Activated CD4-positive, alpha-beta memory T cell treated with anti-CD3 and anti-CD28 coated beads for 36 hours (primary cell): ENCODE measurements at regions of chr11 and their contacts with region 1.

Region 1: DNA sequence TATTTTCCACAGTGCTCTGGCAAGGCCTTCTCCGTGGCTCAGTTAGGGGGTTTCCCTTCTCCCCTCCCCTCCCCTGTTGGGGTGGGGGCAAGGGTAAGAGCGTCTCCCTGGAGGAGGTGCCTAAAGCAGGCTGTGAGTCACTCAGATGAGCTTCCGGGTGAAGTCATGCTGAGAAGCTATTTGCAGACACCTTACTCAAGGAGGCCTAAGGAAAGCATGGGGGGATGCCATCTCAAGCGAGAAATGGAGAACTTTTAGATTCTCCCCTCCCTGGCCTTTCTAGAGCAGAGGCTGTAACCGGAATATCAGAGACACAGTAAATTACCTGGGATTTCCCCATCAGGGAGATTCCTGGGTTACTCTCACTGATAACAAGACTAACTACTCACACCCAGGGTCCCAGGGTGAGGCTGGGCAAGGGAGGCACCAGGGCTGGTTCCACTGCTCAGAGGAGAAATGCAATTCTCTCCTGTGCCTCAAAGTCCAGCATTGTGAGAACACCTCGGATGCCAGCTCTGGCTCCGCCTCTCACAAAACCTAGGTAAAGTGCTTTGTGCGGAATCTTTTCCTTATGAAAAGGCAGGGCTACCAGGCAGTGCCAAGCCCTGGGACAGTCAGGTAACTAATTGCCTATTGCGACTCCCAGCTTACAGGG is 123.6 kb downstream of the ABTB2 start:
- DNase-seq: peak; percentile 90
- H3K4me3 Mint-ChIP-seq: no peak overlapping the region
- H3K27ac Mint-ChIP-seq: peak overlapping the region; percentile 77
- H3K4me1 Mint-ChIP-seq: peaks cover 46% of the 10 kb centered on the region
- H3K27me3 Mint-ChIP-seq: peaks cover 6% of the 10 kb centered on the region

Region 2: GRCh38 chr11:34051349-34052035 is 182.7 kb before region 1 on chr11 and contains the start of gene CAPRIN1:
- CTCF ChIA-PET with region 1: no interaction called
- POLR2A ChIA-PET with region 1: no interaction called
- intact Hi-C with region 1: loop called (anchors 5 kb)
- DNase-seq: peak; percentile 88
- H3K4me3 Mint-ChIP-seq: peak within 1 kb of the TSS; percentile 92
- H3K27ac Mint-ChIP-seq: peak within 1 kb of the TSS; percentile 96
- H3K4me1 Mint-ChIP-seq: peaks cover 18% of the 10 kb centered on the region
- H3K27me3 Mint-ChIP-seq: no peaks in the 10 kb centered on the region
- total RNA-seq, gene CAPRIN1: 261 to 264 TPM

Region 3: DNA sequence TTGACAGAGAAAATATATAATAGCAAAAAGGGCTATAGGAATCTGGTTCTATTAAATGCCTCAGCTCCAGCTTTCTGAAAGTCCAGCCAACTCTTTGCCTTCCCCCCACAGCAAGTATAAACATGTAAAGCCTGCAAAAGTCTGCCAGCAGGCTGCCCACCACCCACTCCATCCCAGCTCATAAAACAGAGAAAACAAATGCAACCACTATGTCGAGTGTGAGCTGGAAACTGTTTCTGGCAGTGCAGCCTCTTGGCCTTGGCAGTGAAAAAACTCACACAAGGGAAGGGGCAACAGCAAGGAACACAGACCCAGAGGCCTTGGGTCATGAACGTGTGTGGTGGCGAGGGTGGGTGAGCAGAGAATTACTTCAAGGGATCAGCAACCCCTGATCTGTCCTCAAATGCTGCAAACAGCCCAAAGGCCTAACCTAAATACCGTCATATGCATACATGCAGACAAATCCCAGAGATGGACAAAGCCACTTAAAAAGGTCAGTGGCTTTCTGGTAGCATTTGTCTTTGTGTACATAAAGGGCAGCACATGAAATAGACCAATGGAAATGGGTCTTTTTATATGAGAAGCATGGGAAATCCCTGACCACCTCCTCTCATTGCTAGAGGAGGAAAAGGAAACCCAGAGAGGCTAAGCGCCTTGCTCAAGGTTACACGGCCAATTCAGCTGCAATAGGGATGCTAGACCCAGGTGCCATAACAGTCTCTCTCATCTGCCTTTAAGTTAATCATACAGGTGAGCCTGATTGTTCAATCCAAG is 54.0 kb before region 1 on chr11:
- CTCF ChIA-PET with region 1: interaction called, 17 read pairs
- POLR2A ChIA-PET with region 1: interaction called, 5 read pairs
- intact Hi-C with region 1: loop called (anchors 2 kb)
- DNase-seq: peak; percentile 30
- H3K4me3 Mint-ChIP-seq: no peak overlapping the region
- H3K27ac Mint-ChIP-seq: no peak overlapping the region
- H3K4me1 Mint-ChIP-seq: peaks cover 21% of the 10 kb centered on the region
- H3K27me3 Mint-ChIP-seq: peaks cover 2% of the 10 kb centered on the region

Region 4: DNA sequence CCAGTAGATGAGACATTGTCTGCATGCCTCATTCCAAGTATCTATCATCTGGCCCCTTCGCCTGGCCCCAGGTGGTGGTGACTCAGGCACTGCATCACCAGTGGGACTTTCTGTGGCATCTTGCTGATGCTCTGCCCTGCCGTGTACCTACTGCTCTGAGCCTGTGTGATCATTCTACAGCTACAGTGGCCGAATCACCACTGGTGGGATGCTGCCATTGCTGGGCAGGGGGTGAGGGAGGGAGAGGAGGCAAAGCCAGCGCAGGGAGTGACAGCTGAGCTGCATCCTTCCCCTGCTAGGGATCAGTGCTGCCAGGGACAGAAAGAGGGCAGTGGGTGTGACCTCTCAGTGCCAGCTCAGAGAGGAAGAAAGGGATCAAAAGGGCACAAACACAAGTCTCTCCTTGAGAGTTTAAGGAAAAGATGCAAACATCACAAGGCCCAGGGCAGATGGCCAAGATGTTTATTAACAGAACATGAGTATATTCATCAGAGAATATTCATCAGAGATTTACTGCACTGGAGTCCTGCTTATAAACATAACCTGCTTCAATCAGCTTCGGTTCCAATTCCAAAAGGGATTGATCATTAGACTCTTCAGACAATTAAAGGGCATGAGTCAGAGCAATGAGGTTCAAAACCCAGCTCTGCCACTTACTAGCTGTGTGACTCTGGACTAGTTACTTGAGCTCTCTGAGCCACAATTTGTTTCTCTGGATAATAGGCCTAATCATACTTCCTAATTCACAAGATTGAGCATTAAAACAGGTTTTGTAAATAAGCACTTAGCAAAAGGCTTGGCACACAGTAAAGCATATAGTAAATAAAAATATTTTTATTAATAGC is 19.0 kb before region 1 on chr11:
- CTCF ChIA-PET with region 1: interaction called, 10 read pairs
- POLR2A ChIA-PET with region 1: interaction called, 12 read pairs
- intact Hi-C with region 1: loop called (anchors 1 kb)
- DNase-seq: peak; percentile 94
- H3K4me3 Mint-ChIP-seq: no peak overlapping the region
- H3K27ac Mint-ChIP-seq: peak overlapping the region; percentile 80
- H3K4me1 Mint-ChIP-seq: peaks cover 21% of the 10 kb centered on the region
- H3K27me3 Mint-ChIP-seq: peaks cover 6% of the 10 kb centered on the region